Panc1 (cell line): ENCODE measurements at regions of chr11 and their contacts with region 1.

Region 1: DNA sequence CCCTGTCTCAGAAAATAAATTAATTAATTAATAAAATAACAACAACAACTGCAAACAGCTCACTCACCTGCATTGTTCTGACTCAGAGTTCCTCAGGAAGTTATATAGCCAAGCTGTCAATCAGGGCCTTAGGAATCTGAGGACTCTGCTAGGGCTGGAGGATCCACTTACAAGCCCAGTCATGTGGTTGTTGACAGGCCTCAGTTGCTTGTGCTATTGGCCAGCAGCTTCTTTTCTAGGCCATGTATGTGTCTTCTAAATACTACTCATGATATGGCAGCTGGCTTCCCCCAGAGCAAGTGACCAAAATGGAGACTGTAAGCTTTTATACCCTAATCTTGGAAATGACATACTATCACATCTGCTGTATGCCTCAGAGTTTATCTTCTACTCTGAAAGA is 20.8 kb upstream of the ATP5MG start:
- DNase-seq: no peak
- ATAC-seq: no peak
- H3K4me3 ChIP-seq: no peak overlapping the region
- H3K27ac ChIP-seq: no peak overlapping the region
- H3K4me1 ChIP-seq: no peaks in the 10 kb centered on the region
- H3K27me3 ChIP-seq: no peaks in the 10 kb centered on the region
- CTCF ChIP-seq: no peak

Region 2: DNA sequence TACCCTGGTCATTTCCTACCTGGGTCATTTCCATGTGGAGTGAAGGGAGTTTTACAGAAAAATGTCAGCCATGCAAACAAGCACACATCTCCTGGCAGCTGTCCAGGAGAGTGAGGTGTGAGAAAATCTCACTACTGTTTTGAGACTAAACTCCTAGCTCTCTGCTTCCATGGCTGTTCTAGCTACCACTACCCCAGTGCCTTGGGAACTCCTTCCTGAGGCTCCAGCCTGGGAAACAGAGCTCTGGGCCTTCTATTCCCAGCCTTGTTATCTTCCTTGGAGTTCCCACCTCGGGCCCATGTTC is 448.6 kb before region 1 on chr11:
- CTCF ChIA-PET with region 1: no interaction called
- POLR2A ChIA-PET with region 1: no interaction called
- in situ Hi-C with region 1: no loop called
- intact Hi-C with region 1: no loop called
- DNase-seq: no peak
- ATAC-seq: no peak
- H3K4me3 ChIP-seq: no peak overlapping the region
- H3K27ac ChIP-seq: no peak overlapping the region
- H3K4me1 ChIP-seq: no peaks in the 10 kb centered on the region
- H3K27me3 ChIP-seq: peaks cover 20% of the 10 kb centered on the region
- CTCF ChIP-seq: no peak

Region 3: GRCh38 chr11:118430956-118431355 is 50.4 kb after region 1 on chr11:
- CTCF ChIA-PET with region 1: no interaction called
- POLR2A ChIA-PET with region 1: no interaction called
- in situ Hi-C with region 1: no loop called
- intact Hi-C with region 1: no loop called
- DNase-seq: no peak
- ATAC-seq: no peak
- H3K4me3 ChIP-seq: no peak overlapping the region
- H3K27ac ChIP-seq: peak overlapping the region; percentile 48; the same call in 1 of the 2 replicates
- H3K4me1 ChIP-seq: peaks cover 30% of the 10 kb centered on the region
- H3K27me3 ChIP-seq: no peaks in the 10 kb centered on the region
- CTCF ChIP-seq: peak; percentile 55; the same call in 1 of the 2 replicates

Region 4: GRCh38 chr11:118462178-118462577 is 81.6 kb after region 1 on chr11:
- CTCF ChIA-PET with region 1: no interaction called
- POLR2A ChIA-PET with region 1: no interaction called
- in situ Hi-C with region 1: no loop called
- intact Hi-C with region 1: no loop called
- DNase-seq: no peak
- ATAC-seq: no peak
- H3K4me3 ChIP-seq: no peak overlapping the region
- H3K27ac ChIP-seq: no peak overlapping the region
- H3K4me1 ChIP-seq: no peaks in the 10 kb centered on the region; the same call in 1 of the 2 replicates
- H3K27me3 ChIP-seq: no peaks in the 10 kb centered on the region
- CTCF ChIP-seq: no peak

Region 5: DNA sequence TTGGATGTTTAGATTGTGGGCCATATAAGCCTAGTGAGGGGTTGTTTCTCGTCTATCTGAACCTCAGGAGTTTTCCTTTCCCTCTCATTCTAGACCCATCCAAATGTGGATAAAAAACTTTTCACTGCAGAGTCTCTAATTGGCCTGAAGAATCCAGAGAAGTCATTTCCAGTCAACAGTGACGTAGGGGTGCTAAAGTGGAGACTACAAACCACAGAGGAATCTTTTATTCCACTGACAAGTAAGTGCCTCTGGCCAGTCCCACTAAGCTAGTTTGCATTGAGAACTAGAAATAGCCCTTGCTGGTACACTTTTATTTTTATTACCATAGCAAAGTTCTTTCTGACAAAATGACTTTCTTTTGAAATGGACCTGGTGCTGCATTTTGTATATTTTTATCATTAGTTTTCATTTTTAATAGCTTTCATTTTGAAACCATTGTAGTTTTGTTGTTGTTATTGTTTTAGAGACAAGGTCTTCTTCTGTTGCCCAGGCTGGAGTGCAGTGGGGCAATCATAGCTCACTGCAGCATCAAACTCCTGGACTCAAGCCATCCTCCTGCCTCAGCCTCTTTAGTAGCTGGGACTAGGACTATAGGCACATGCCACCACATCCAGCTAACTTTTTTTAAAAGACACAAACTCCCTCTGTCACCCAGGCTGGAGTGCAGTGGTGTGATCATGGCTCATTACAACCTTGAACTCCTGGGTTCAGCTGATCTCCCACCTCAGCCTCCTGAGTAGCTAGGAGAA is 212.2 kb after region 1 on chr11:
- CTCF ChIA-PET with region 1: no interaction called
- POLR2A ChIA-PET with region 1: interaction called, 17 read pairs
- in situ Hi-C with region 1: no loop called
- intact Hi-C with region 1: no loop called
- DNase-seq: no peak
- ATAC-seq: no peak
- H3K4me3 ChIP-seq: no peak overlapping the region
- H3K27ac ChIP-seq: no peak overlapping the region
- H3K4me1 ChIP-seq: no peaks in the 10 kb centered on the region
- H3K27me3 ChIP-seq: no peaks in the 10 kb centered on the region
- CTCF ChIP-seq: no peak

Region 6: GRCh38 chr11:118621071-118621783 is 240.7 kb after region 1 on chr11:
- CTCF ChIA-PET with region 1: no interaction called
- POLR2A ChIA-PET with region 1: no interaction called
- in situ Hi-C with region 1: no loop called
- intact Hi-C with region 1: no loop called
- DNase-seq: no peak
- ATAC-seq: peak; percentile 88
- H3K4me3 ChIP-seq: peak overlapping the region; percentile 67 to 98
- H3K27ac ChIP-seq: peak overlapping the region; percentile 96
- H3K4me1 ChIP-seq: peaks cover 38% of the 10 kb centered on the region
- H3K27me3 ChIP-seq: no peaks in the 10 kb centered on the region
- CTCF ChIP-seq: no peak